MCF 10A (cell line): ENCODE measurements at regions of chr1 and their contacts with region 1.

Region 1: DNA sequence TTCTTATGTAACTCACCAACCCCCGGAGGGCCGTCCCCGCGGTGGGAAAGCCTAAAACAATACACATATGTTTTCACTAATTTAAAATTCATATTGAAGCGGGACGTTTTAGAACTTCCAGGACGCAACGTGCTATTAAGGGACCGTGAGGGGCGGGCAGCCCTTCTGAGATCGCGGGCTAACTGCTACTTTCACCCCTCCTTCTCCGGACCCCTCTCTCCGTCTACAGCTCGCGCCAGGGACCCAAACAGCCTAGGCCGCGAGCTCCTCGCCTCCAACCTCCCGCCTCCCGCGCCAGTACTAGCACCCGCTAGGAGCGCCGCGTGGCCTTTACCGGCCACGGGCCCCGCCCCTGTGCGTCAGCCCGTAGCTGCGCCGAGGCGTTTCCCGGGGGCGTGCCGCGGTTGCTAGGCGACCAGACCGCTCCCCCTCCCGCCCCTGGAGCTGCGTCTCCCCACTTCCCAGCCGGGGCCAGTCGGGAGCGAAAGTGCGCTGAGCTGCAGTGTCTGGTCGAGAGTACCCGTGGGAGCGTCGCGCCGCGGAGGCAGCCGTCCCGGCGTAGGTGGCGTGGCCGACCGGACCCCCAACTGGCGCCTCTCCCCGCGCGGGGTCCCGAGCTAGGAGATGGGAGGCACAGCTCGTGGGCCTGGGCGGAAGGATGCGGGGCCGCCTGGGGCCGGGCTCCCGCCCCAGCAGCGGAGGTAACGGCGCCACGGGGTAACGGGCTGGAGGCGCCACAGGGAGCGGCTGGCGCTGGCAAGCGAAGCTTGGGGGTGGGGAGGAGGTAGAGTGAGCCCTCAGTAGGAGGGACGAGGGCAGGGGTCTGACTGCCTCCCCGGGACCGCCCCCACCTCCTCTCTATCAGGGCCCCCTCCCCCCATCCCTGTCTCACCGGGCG is at the start of gene DYRK3:
- DNase-seq: peak; percentile 99
- H3K4me3 Mint-ChIP-seq: peak within 1 kb of the TSS; percentile 89
- H3K27ac Mint-ChIP-seq: peak within 1 kb of the TSS; percentile 82
- H3K4me1 Mint-ChIP-seq: peaks cover 38% of the 10 kb centered on the region
- H3K27me3 Mint-ChIP-seq: no peaks in the 10 kb centered on the region
- CTCF ChIP-seq: no peak
- total RNA-seq, gene DYRK3: 45.4 and 58.5 TPM in 2 replicates

Region 2: GRCh38 chr1:206658264-206658980 is 23.1 kb after region 1 on chr1:
- CTCF ChIA-PET with region 1: interaction called, 1,191 read pairs
- POLR2A ChIA-PET with region 1: interaction called, 193 read pairs
- intact Hi-C with region 1: no loop called
- DNase-seq: no peak
- H3K4me3 Mint-ChIP-seq: no peak overlapping the region
- H3K27ac Mint-ChIP-seq: no peak overlapping the region
- H3K4me1 Mint-ChIP-seq: peaks cover 6% of the 10 kb centered on the region
- H3K27me3 Mint-ChIP-seq: peaks cover 13% of the 10 kb centered on the region
- CTCF ChIP-seq: peak; percentile 89

Region 3: DNA sequence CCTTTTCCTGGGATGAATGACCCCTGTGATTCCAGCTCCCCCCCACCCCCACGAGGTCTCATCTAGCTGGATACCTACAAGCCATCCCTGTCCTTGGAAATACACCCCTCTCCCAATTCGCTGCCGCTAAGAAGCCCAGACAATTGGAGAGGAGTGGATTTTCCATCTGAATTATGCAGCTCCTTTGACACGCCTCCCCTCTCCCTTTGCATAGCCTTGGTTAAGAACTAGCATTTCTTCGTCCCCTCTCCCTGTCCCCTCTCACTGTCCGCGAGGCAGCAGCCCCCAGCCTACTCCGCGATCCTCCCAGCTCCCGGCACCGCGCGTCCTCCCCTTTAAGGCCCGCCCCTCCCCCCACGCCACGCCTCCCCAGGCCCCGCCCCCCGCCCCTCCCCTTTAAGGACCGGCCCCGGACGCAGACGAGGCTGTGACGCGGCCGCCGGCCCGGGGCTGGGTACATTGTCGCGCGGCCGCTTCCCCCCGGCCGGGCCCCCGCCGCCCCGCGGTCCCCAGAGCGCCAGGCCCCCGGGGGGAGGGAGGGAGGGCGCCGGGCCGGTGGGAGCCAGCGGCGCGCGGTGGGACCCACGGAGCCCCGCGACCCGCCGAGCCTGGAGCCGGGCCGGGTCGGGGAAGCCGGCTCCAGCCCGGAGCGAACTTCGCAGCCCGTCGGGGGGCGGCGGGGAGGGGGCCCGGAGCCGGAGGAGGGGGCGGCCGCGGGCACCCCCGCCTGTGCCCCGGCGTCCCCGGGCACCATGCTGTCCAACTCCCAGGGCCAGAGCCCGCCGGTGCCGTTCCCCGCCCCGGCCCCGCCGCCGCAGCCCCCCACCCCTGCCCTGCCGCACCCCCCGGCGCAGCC is 49.4 kb after region 1 on chr1 and contains the start of gene MAPKAPK2:
- CTCF ChIA-PET with region 1: interaction called, 46 read pairs
- POLR2A ChIA-PET with region 1: interaction called, 48 read pairs
- intact Hi-C with region 1: no loop called
- DNase-seq: peak; percentile 83
- H3K4me3 Mint-ChIP-seq: peak within 1 kb of the TSS; percentile 93
- H3K27ac Mint-ChIP-seq: peak within 1 kb of the TSS; percentile 97
- H3K4me1 Mint-ChIP-seq: peaks cover 46% of the 10 kb centered on the region
- H3K27me3 Mint-ChIP-seq: no peaks in the 10 kb centered on the region
- CTCF ChIP-seq: no peak
- total RNA-seq, gene MAPKAPK2: 142 and 178 TPM in 2 replicates

Region 4: DNA sequence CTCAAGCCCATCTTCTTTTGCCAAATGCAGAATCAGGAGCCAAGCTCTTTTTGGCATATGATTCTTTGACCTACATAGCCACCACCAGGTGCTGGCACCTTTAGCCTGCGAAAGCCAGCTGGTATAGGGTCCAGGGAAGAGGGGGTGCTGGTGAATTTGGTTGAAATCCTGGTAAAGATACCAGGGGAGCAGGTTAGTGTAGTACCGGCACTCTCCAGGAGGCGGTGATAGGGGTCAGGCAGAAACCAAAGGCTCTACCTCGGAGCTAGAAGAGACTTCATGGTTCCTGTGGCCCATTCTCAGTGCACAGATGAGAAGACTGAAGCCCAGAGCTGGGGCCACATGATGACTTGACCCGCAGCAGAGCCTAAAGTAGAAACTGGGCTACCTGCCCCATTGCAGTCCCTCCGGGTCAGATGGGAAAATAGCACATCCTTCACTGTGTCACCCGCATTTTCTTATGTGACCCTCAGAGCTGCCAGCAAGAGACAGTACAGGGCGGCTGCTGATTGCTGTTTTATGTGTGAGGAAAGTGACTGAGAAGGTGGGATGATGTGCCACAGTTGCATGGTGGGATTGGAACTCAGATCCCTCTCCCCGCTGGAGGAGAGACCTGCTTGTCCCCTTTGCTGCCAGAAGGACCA is 99.3 kb after region 1 on chr1:
- CTCF ChIA-PET with region 1: interaction called, 25 read pairs
- POLR2A ChIA-PET with region 1: interaction called, 4 read pairs
- intact Hi-C with region 1: no loop called
- DNase-seq: peak; percentile 73
- H3K4me3 Mint-ChIP-seq: no peak overlapping the region
- H3K27ac Mint-ChIP-seq: peak overlapping the region; percentile 6
- H3K4me1 Mint-ChIP-seq: peaks cover 9% of the 10 kb centered on the region
- H3K27me3 Mint-ChIP-seq: no peaks in the 10 kb centered on the region
- CTCF ChIP-seq: peak; percentile 97

Region 5: GRCh38 chr1:207017615-207018559 is 382.6 kb after region 1 on chr1:
- CTCF ChIA-PET with region 1: interaction called, 3 read pairs
- POLR2A ChIA-PET with region 1: interaction called, 16 read pairs
- intact Hi-C with region 1: no loop called
- DNase-seq: peak; percentile 89
- H3K4me3 Mint-ChIP-seq: no peak overlapping the region
- H3K27ac Mint-ChIP-seq: peak overlapping the region; percentile 60
- H3K4me1 Mint-ChIP-seq: peaks cover 49% of the 10 kb centered on the region
- H3K27me3 Mint-ChIP-seq: no peaks in the 10 kb centered on the region
- CTCF ChIP-seq: no peak